AG04449 (cell line): ENCODE measurements at regions of chr17 and their contacts with region 1.

Region 1: GRCh38 chr17:48483471-48484131 is 47.2 kb downstream of the HOXB1 start:
- DNase-seq: peak; percentile 87
- H3K4me3 ChIP-seq: 0 out of 2 replicates have a peak overlapping the region, but pooled peaks have one; percentile 19
- CTCF ChIP-seq: no peak

Region 2: GRCh38 chr17:48472411-48473281 is 11.0 kb before region 1 on chr17:
- CTCF ChIA-PET with region 1: interaction called, 6 read pairs
- POLR2A ChIA-PET with region 1: interaction called, 29 read pairs
- DNase-seq: no peak
- H3K4me3 ChIP-seq: no peak overlapping the region
- CTCF ChIP-seq: no peak

Region 3: DNA sequence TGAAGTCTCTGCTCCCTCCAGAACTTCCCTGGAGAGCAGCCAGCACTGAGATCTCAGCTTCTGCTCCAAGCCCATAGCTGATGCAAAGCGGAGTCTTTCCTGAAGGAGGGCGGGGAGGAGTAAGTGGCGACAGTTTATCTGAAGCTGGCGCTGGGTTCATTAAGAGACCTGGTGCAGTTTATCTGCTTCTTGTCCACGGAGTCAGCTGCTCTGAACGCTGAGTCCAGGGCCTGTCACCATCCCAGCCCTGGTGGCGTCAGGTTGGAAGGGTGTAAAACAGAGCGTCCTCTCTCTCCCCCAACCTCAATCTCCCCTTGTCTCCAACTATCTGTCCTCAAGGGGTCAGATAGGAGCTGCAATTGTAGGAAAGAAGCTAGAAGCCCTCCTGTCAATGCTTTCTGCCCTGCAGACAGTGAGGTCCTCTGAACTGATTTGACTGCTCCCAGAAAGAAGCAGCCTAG is 17.4 kb after region 1 on chr17:
- CTCF ChIA-PET with region 1: interaction called, 18 read pairs
- POLR2A ChIA-PET with region 1: interaction called, 6 read pairs
- DNase-seq: no peak
- H3K4me3 ChIP-seq: no peak overlapping the region
- CTCF ChIP-seq: no peak

Region 4: GRCh38 chr17:48543107-48543853 is 59.7 kb after region 1 on chr17:
- CTCF ChIA-PET with region 1: interaction called, 5 read pairs
- POLR2A ChIA-PET with region 1: interaction called, 57 read pairs
- DNase-seq: no peak
- H3K4me3 ChIP-seq: peak overlapping the region; percentile 84
- CTCF ChIP-seq: no peak